Left lung (tissue), 14 donors: ENCODE measurements at regions of chrX and their contacts with region 1.

Region 1: GRCh38 chrX:40266490-40267333 is 169.0 kb upstream of the BCOR start:
- DNase-seq: peak; percentile 68 to 89 (median 74)
- ATAC-seq: peak; percentile 89
- H3K4me3 ChIP-seq: peak overlapping the region; percentile 21 to 45
- H3K27ac ChIP-seq: peak overlapping the region; percentile 19 to 65
- H3K4me1 ChIP-seq: peaks cover 3 to 16% of the 10 kb centered on the region in 2 donors
- H3K27me3 ChIP-seq: peaks cover 0 to 5% of the 10 kb centered on the region in 2 donors
- CTCF ChIP-seq: peak; percentile 53 to 60

Region 2: DNA sequence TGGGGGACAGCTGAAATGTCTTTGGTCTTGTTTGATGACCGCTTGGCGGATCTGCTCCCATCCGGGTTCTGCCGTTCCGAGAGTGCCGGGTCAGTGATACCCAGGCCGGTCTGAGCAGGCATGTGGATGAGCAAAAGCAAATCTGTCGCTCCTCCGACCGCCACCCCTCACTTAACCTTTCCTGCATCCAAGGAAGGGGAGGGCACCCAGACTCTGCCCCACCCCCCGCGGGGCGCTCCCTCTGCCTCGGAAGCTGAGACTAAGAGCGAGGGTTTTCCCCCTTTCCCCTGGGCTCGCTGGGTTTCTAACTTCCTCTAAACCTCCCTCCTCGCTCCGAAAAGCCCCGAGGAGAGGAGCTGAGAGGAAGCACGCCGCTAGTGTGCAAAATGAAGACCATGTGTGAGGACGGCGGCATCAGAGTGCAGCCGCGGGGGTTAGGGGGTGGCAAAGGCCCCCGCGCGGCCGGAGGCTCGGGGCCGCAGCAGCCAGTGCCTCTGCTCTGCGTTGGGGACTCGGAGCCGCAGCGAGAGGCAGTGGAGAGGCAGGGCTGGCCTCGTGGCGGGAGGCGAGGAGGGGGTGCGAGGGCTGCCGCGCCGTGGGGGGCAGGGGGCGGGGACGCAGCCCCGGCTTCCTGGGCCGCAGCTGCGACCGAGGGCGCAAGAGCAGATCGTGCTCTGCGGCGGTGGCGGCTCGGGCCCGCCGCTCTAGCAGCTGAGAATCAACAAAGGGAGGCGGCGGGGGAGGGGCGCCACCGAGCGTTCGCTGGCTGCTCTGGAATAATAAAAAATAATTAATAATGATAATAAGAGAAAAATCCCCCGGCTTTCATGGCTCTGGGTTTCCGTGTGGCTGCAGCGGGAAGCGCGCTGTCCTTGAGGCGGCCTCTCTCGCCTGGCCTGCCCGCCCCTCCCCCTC is 113.1 kb before region 1 on chrX:
- intact Hi-C with region 1: loop called in 1 of 2 experiments (anchors 10 kb)
- DNase-seq: peak in 2 of 4 donors; percentile 72 to 86
- ATAC-seq: peak; percentile 34
- H3K4me3 ChIP-seq: peak overlapping the region; percentile 16 to 37
- H3K27ac ChIP-seq: peak overlapping the region; percentile 57 to 59
- H3K4me1 ChIP-seq: peaks cover 3 to 56% of the 10 kb centered on the region in 2 donors
- H3K27me3 ChIP-seq: peaks cover 0 to 77% of the 10 kb centered on the region in 2 donors
- CTCF ChIP-seq: no peak

Region 3: GRCh38 chrX:40719218-40719617 is 452.5 kb after region 1 on chrX:
- intact Hi-C with region 1: no loop called
- DNase-seq: no peak
- ATAC-seq: no peak
- H3K4me3 ChIP-seq: no peak overlapping the region
- H3K27ac ChIP-seq: no peak overlapping the region
- H3K4me1 ChIP-seq: no peaks in the 10 kb centered on the region
- H3K27me3 ChIP-seq: no peaks in the 10 kb centered on the region
- CTCF ChIP-seq: no peak